ENCODE measurements at regions of chr15 and their contacts with region 1.

Region 1: DNA sequence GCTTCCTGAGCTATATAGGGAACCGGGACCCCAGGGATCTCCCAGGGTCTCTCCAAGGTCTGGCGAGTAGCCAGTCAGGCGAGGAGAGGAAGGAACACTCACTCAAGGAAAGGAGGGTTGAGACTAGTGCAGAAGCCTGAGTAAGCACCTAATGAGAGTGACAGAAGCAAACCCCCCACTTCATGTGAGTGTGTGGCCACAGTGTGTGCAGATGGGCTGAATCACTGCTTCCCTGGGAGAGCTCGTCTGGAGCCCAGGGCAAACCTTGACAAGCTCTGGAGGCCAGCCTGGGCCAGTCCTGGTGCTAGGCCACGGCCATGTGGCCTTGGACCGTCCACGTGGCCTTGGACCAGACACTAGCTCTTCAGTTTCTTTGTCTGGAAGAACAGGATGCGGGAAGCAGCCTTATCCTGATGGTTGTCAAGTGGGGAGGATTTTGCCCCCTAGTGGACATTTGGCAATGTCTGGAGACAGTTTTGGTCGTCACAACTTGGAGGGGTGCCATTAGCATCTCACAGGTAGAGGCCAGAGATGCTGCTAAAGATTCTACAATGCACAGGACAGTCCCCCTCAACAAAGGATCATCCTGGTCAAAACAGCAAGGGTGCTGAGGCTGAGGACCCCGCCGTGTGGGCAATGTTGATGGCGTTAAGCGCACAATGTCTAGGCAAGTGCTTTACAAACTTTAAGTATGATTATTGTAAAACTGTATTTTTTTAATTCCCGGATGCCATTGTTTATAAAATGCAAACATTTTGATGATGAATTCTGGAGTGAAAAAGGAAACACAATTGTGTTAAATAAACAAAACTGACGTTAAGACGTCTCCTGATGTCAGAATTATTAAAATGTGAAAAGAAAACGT is 34.8 kb upstream of the CTSH start:
- DNase-seq: peak; percentile 81
- ATAC-seq: peak; percentile 86
- H3K4me3 ChIP-seq: no peak overlapping the region
- H3K27ac ChIP-seq: no peak overlapping the region
- H3K4me1 ChIP-seq: no peaks in the 10 kb centered on the region
- H3K27me3 ChIP-seq: no peaks in the 10 kb centered on the region; the same call in 1 of the 2 replicates
- CTCF ChIP-seq: peak; percentile 69
- POLR2A ChIP-seq: no peak
- RAD21 ChIP-seq: peak; percentile 46

Region 2: GRCh38 chr15:78909791-78910228 is 69.9 kb before region 1 on chr15:
- CTCF ChIA-PET with region 1: no interaction called
- POLR2A ChIA-PET with region 1: no interaction called
- dilution Hi-C with region 1: no loop called
- in situ Hi-C with region 1: no loop called
- intact Hi-C with region 1: loop called (anchors 2 kb)
- DNase-seq: peak; percentile 45
- ATAC-seq: peak; percentile 28
- H3K4me3 ChIP-seq: no peak overlapping the region
- H3K27ac ChIP-seq: no peak overlapping the region
- H3K4me1 ChIP-seq: peaks cover 15% of the 10 kb centered on the region
- H3K27me3 ChIP-seq: no peaks in the 10 kb centered on the region
- CTCF ChIP-seq: peak; percentile 70
- POLR2A ChIP-seq: no peak
- RAD21 ChIP-seq: peak; percentile 69